CD4-positive, alpha-beta memory T cell (primary cell): ENCODE measurements at regions of chr3 and their contacts with region 1.

Region 1: DNA sequence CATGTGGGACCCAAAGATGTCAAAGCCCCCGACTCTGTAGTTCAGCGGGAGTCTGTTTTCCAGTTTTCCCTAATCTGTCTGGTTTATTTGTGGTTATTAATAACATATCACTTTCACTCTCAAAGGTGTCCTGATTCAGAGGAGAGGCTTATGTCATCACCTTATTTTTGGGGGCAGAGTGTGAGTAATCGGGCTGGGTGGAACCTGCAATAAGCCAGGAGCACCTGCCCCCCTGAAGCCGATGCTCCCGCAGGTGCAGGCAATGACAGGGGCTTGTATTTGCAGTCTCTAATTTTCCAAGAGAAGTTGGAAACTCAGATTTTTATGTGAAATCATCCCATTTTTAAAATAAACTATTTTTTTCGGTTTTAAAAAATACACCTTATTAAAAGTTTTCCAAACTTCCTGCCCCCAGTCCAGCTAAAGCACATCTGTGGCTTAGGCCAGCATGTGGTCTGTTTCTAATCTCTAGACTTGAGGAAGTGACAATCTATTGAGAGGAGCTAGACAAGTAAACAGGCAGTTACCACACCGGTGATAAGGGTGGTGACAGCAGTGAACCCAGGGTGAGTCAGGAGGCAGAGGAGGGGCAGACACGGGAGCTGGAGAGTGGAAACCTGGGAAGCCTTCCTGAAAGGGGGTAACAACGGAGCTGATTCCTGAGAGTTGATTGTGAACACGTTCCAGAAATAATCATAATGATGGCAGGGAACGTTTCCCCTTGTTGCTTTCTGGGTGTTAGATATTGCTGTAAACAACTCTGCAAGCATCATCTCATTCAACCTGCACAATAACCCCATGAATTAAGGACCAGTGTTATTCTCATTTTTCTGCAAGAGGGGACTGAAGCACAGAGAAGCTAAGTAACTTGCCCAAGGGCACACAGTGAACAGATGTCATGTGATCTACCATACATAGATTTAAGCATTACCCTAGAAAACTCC is 37.3 kb downstream of the BHLHE40 start:
- DNase-seq: peak; percentile 32 to 78 (median 48)
- H3K4me3 ChIP-seq: no peak overlapping the region
- H3K4me3 Mint-ChIP-seq: peak overlapping the region; percentile 1 to 76 (median 61)
- H3K27ac ChIP-seq: no peak overlapping the region
- H3K27ac Mint-ChIP-seq: peak overlapping the region; percentile 82 to 97 (median 91)
- H3K4me1 ChIP-seq: peaks cover 71% of the 10 kb centered on the region
- H3K4me1 Mint-ChIP-seq: peaks cover 51 to 82% (median 67%) of the 10 kb centered on the region in 4 donors
- H3K27me3 ChIP-seq: no peaks in the 10 kb centered on the region
- H3K27me3 Mint-ChIP-seq: no peaks in the 10 kb centered on the region

Region 2: DNA sequence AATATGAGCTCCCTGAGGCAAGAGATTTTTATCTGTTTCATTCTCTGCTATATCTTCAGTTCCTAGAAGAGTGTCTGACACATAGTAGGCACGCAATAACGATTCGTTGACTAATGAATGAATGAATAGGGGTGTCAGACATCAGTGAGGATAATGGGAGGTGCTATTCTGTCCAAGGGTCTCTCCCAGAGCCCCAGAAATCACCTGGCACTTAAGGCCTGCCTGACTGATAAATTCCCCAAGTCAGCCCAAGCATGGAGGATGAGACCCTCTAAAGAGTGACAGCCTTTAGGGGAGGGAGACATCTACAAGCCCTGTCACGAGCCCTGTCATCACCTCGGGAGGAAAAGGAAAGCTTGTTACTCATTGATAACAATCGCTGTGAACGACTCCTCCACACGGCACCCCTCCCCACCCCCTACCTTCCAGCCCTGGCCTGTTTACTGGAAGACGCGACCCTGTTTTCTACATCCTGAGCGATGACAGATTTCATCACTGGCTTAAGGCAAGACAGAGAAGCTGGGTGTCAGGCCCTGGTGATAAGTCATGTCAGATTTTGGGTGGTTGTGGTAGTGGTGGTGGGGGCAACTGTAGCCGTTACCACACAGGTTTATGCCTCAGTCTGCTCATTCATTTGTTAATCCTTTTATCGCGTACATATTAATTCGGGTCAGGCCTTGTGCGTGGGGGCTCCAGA is 14.2 kb before region 1 on chr3:
- CTCF ChIA-PET with region 1: interaction called, 4 read pairs
- POLR2A ChIA-PET with region 1: interaction called, 4 read pairs
- intact Hi-C with region 1: loop called (anchors 2 kb)
- DNase-seq: peak; percentile 41 to 88 (median 48)
- H3K4me3 ChIP-seq: no peak overlapping the region
- H3K4me3 Mint-ChIP-seq: peak overlapping the region in 4 of 8 donors; percentile 22 to 53 (median 51)
- H3K27ac ChIP-seq: no peak overlapping the region
- H3K27ac Mint-ChIP-seq: peak overlapping the region in 6 of 7 donors; percentile 61 to 87 (median 83)
- H3K4me1 ChIP-seq: peaks cover 37% of the 10 kb centered on the region
- H3K4me1 Mint-ChIP-seq: peaks cover 19 to 56% (median 28%) of the 10 kb centered on the region in 4 donors
- H3K27me3 ChIP-seq: no peaks in the 10 kb centered on the region
- H3K27me3 Mint-ChIP-seq: no peaks in the 10 kb centered on the region

Region 3: DNA sequence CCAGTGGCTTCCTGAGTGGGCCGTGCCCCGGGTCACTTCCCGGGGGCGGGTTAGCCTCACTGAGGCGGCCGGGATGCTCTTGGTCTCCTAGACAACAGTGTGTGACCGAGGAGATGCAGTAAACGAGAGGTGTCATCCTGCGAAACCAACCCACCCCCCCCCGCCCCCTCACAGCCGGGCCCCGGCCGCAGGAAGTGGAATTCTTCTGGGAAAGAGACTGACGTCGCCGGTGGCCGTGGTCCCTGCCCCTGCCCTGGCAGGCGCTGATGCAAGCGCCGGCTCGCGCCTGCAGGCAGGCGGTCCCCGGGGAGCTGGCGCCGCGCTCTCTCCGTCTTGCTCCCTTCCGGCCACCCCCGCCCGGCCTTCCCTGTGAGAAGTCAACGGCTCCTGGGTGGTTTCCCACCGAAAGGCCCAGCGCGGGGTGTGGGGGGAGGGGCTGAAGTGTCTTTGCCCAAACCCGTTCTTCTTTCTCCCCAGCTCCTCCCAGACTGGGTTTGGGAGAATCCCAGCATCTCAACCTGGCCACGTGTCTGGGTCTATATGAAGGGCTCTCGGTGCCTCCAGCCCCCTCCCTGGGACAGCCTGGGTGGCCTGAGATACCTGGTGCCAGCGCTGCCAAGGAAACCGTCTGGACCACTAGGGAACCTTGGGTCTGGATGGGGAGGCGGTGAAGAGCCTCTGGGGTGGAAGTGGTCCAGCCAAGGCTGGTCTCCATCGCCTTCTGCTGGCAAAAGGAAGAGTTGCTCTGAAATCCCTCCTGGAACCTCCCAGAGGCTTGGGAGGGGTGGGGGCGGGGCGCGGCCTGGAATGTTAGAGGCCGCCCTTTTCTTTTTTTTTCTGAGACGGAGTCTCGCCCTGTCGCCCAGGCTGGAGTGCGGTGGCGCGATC is 10.1 kb after region 1 on chr3:
- CTCF ChIA-PET with region 1: interaction called, 24 read pairs
- POLR2A ChIA-PET with region 1: interaction called, 11 read pairs
- intact Hi-C with region 1: no loop called
- DNase-seq: peak; percentile 54 to 77 (median 57)
- H3K4me3 ChIP-seq: peak overlapping the region in 1 of 2 donors; percentile 71
- H3K4me3 Mint-ChIP-seq: peak overlapping the region; percentile 85 to 93 (median 87)
- H3K27ac ChIP-seq: peak overlapping the region; percentile 50
- H3K27ac Mint-ChIP-seq: peak overlapping the region; percentile 81 to 97 (median 93)
- H3K4me1 ChIP-seq: peaks cover 13% of the 10 kb centered on the region
- H3K4me1 Mint-ChIP-seq: peaks cover 15 to 35% (median 23%) of the 10 kb centered on the region in 4 donors
- H3K27me3 ChIP-seq: no peaks in the 10 kb centered on the region
- H3K27me3 Mint-ChIP-seq: no peaks in the 10 kb centered on the region